ENCODE measurements at regions of chr20 and their contacts with region 1.

Region 1: DNA sequence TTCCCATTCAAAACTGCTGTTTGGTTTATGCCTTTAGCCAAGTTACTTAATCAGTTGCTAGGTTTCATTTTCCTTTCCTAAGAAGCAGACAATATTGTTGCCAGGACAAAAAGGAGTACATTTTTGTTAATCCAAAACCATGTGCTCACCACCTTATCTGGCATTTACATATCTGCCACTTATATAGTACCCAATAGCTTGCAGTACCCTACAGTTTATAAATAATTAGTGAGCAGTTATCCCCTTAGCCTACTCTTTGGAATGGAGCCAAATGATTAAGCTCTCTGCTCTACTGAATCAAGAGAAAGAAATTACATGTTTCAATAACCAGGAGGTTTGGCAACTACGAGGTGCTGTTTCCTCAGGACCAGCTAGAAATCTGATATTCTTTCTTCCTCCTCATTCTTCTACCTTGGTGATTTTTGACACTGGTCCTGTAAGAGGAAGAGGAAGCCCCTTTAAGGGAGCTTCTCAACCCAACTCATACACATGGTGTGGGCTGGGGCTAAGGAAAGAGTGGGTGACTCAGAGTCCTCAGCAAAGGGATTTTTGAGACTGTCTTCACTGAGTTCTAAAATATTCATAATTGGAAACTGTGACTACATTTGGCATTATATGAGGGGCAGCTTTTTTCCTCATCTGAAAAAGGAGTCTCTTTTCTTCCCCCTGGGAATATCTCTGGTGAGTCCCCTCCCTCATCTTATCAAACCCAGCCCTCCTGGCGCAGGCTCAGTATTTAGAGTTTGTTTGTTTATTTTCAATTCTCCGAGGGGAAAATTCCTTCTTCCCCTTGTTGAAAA is 1.5 kb downstream of the ZNFX1 start:
- DNase-seq: peak; percentile 63
- ATAC-seq: no peak
- H3K4me3 Mint-ChIP-seq: peak overlapping the region; percentile 94
- H3K27ac Mint-ChIP-seq: peak overlapping the region; percentile 92
- H3K4me1 Mint-ChIP-seq: peaks cover 56% of the 10 kb centered on the region
- H3K27me3 Mint-ChIP-seq: no peaks in the 10 kb centered on the region

Region 2: DNA sequence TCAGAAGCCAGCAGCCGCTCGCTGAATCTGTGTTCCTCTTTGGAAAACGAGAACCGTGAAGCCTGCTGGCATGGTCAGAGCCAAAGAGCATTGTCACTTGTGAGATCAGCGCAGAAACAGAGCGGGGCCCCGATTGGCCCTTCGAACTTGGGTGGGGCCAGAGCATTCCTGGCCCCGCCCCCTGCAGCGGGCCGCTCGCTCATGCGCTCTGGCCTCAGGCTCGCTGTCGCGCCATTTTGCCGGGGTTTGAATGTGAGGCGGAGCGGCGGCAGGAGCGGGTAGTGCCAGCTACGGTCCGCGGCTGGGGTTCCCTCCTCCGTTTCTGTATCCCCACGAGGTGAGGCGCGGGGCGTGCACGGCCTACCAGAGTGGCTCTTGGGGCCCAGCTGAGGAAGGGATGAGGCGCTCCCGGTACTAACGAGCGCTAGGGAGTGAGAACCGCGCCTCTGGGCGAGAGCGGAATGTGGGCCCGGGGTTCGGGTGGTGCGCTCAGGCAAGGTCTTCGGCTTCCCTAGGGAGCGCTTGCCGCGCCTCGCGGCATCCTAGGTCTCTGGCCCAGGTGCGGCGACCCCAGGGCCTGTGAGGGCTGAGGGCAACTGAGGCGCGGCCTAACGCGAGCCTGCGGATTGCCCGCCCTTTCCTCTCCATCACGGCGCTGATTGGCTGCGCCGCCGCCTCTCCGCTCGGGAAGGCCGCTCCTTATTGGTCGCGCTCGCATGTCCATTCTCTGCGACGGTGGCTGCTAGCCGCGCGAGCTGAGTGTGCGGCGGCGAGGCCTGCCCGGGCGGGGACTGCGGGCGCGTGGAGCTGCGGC is 230.1 kb before region 1 on chr20 and contains the start of gene CSE1L:
- CTCF ChIA-PET with region 1: no interaction called
- POLR2A ChIA-PET with region 1: interaction called, 10 read pairs
- DNase-seq: peak; percentile 96
- ATAC-seq: peak; percentile 92
- H3K4me3 Mint-ChIP-seq: peak within 1 kb of the TSS; percentile 99
- H3K27ac Mint-ChIP-seq: peak within 1 kb of the TSS; percentile 100
- H3K4me1 Mint-ChIP-seq: peaks cover 38% of the 10 kb centered on the region
- H3K27me3 Mint-ChIP-seq: no peaks in the 10 kb centered on the region
- total RNA-seq, gene CSE1L: 98.0 to 102 TPM

Measured in activated CD8-positive, alpha-beta T cell treated with anti-CD3 and anti-CD28 coated beads, Interleukin-2, amount 10 ng/mL, durations not matched to agents 7 days and 5 days (primary cell).